ENCODE measurements at regions of chrX and their contacts with region 1.

Region 1: GRCh38 chrX:49884290-49884862 is 5.1 kb downstream of the USP27X start:
- DNase-seq: peak in 31 of 35 experiments; percentile 14 to 66 (median 39)
- ATAC-seq: no peak
- H3K4me3 ChIP-seq: no peak overlapping the region
- H3K4me3 Mint-ChIP-seq: no peak overlapping the region
- H3K27ac ChIP-seq: no peak overlapping the region
- H3K27ac Mint-ChIP-seq: peak overlapping the region in 1 of 2 donors; percentile 63
- H3K4me1 ChIP-seq: peaks cover 0 to 17% of the 10 kb centered on the region in 2 experiments
- H3K4me1 Mint-ChIP-seq: peaks cover 10 to 32% (median 25%) of the 10 kb centered on the region in 3 donors
- H3K27me3 ChIP-seq: no peaks in the 10 kb centered on the region
- H3K27me3 Mint-ChIP-seq: peaks cover 0 to 10% of the 10 kb centered on the region in 2 donors

Region 2: DNA sequence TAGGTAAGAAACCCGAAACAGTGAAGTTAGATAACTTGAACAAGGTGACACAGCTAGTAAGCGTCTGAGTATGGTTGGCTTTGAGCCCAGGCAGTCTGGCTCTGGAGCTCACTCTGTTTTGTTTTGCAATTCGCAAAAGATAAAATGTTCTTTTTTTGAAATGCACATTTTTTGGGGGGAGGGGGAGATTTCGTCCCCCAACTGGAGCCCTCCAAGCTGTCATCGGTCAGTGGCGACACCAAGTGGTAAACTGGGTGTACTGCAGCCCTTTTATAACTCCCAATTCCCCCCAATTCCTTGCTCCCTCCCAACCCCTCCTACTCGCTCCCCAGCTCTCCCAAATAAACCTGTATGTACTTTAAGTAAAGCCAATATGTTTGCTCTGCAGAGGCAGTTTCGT is 35.2 kb after region 1 on chrX:
- CTCF ChIA-PET with region 1: interaction called, 8 to 10 read pairs
- POLR2A ChIA-PET with region 1: no interaction called
- DNase-seq: peak in 19 of 35 experiments; percentile 1 to 57 (median 15)
- ATAC-seq: no peak
- H3K4me3 ChIP-seq: no peak overlapping the region
- H3K4me3 Mint-ChIP-seq: no peak overlapping the region
- H3K27ac ChIP-seq: no peak overlapping the region
- H3K27ac Mint-ChIP-seq: no peak overlapping the region
- H3K4me1 ChIP-seq: peaks cover 0 to 8% of the 10 kb centered on the region in 2 experiments
- H3K4me1 Mint-ChIP-seq: peaks cover 5 to 11% (median 10%) of the 10 kb centered on the region in 3 donors
- H3K27me3 ChIP-seq: no peaks in the 10 kb centered on the region
- H3K27me3 Mint-ChIP-seq: peaks cover 0 to 7% of the 10 kb centered on the region in 2 donors

Region 3: DNA sequence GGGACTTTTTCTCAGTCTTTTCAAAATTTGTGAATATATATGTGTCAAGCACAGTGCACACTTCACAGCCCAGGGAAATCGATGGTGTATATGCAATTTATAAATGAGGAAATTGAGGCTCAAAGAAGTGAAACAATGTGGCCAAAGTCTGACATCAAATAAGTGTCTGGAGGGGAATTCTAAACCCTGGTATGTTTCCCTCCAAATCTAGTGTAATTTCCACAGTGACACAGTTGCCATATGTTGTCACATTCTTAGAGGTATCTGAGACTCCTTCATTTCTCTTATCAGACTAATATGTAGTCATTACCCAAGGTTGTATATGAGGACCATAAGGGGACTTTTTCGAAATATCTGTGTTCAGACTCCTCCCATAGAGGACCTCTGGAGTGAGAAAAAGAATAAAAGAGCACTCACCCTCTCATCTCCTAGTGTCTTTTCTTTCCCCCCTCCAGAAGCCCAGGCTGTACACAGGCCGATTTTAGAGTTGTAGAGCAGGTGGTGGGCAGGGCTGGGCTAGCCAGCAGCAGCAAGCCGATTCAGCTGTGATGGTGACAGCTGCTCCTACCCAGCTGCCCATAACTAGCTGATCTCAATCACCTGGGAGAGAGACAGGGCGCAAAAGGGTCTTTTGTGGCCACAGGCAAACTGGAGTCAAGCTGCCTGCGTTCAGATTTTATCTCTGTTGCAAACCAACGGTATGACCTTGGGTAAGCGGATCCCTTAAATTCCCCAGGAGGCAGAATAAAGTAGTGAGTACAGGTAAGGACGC is 93.1 kb after region 1 on chrX:
- CTCF ChIA-PET with region 1: no interaction called
- POLR2A ChIA-PET with region 1: no interaction called
- DNase-seq: no peak
- ATAC-seq: no peak
- H3K4me3 ChIP-seq: no peak overlapping the region
- H3K4me3 Mint-ChIP-seq: no peak overlapping the region
- H3K27ac ChIP-seq: no peak overlapping the region
- H3K27ac Mint-ChIP-seq: no peak overlapping the region
- H3K4me1 ChIP-seq: no peaks in the 10 kb centered on the region
- H3K4me1 Mint-ChIP-seq: no peaks in the 10 kb centered on the region
- H3K27me3 ChIP-seq: no peaks in the 10 kb centered on the region
- H3K27me3 Mint-ChIP-seq: peaks cover 0 to 18% of the 10 kb centered on the region in 2 donors